Caco-2 (cell line): ENCODE measurements at regions of chr11 and their contacts with region 1.

Region 1: GRCh38 chr11:124724979-124725718 is 14.6 kb upstream of the NRGN start:
- DNase-seq: peak; percentile 67 to 76
- H3K4me3 ChIP-seq: no peak overlapping the region
- H3K4me3 Mint-ChIP-seq: peak overlapping the region; percentile 63
- H3K27ac Mint-ChIP-seq: peak overlapping the region; percentile 7
- H3K4me1 ChIP-seq: peaks cover 15% of the 10 kb centered on the region
- H3K4me1 Mint-ChIP-seq: peaks cover 17% of the 10 kb centered on the region
- H3K27me3 ChIP-seq: no peaks in the 10 kb centered on the region
- H3K27me3 Mint-ChIP-seq: peaks cover 6% of the 10 kb centered on the region
- CTCF ChIP-seq: no peak

Region 2: DNA sequence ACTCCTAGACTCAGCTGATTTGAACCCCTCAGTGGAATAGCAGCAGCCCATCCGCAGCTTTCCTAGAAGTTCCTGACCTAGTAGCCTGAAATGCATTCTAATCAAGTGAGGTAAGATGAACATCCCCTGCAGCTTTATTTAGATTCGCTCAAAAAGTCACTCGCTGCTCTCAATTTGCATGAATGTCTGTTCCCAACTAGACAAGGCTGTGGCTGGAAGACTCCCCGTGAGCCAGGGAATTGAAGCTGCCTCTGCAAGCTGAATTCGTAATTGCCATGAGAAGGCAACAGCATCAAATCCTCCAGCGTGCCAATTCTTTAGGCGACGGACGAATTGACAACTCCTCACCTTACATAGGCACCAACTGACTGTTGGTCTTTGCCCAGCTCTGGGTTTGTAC is 1053.6 kb before region 1 on chr11:
- CTCF ChIA-PET with region 1: no interaction called
- POLR2A ChIA-PET with region 1: no interaction called
- intact Hi-C with region 1: no loop called
- DNase-seq: no peak
- H3K4me3 ChIP-seq: no peak overlapping the region
- H3K4me3 Mint-ChIP-seq: no peak overlapping the region
- H3K27ac Mint-ChIP-seq: no peak overlapping the region
- H3K4me1 ChIP-seq: no peaks in the 10 kb centered on the region
- H3K4me1 Mint-ChIP-seq: no peaks in the 10 kb centered on the region
- H3K27me3 ChIP-seq: peaks cover 2% of the 10 kb centered on the region; the same call in 1 of the 2 replicates
- H3K27me3 Mint-ChIP-seq: peaks cover 7% of the 10 kb centered on the region
- CTCF ChIP-seq: no peak

Region 3: DNA sequence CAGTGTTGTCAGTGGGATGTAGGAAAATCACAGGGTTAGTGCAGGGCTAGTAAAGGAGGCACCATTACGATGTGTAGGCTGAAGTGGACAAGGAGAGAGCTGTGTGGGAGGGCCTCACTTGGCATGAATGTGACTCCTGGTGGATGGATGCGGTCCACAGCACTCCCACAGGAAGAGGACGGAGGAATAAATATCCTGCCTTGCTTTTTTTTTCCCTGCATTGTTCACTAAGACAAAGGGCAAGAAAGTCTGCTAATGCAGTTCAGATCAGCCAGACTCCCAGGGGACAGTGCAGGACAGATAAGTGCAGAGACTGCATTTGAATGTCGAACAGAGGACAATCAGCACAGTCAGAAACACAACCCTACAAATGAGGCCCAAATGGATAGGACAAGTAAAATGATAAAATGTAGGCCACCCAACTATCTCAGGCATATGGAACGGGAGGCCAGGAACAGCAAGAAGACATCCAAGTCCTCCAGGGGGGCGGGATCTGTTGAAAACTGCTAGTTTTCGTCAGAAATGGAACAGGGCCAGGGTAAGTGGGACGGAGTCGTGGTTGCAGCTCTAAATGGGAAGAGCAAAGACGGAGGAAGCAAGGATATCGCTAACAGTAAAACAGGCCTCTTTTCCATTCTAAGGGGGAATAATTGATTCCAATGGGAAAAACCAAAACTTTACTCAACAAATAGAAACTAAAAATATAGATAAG is 254.5 kb before region 1 on chr11:
- CTCF ChIA-PET with region 1: no interaction called
- POLR2A ChIA-PET with region 1: no interaction called
- intact Hi-C with region 1: no loop called
- DNase-seq: no peak
- H3K4me3 ChIP-seq: no peak overlapping the region
- H3K4me3 Mint-ChIP-seq: no peak overlapping the region
- H3K27ac Mint-ChIP-seq: no peak overlapping the region
- H3K4me1 ChIP-seq: no peaks in the 10 kb centered on the region
- H3K4me1 Mint-ChIP-seq: no peaks in the 10 kb centered on the region
- H3K27me3 ChIP-seq: no peaks in the 10 kb centered on the region; the same call in 1 of the 2 replicates
- H3K27me3 Mint-ChIP-seq: peaks cover 33% of the 10 kb centered on the region
- CTCF ChIP-seq: no peak

Region 4: GRCh38 chr11:124644426-124645280 is 80.5 kb before region 1 on chr11:
- CTCF ChIA-PET with region 1: interaction called, 3 read pairs
- POLR2A ChIA-PET with region 1: no interaction called
- intact Hi-C with region 1: loop called (anchors 1 kb)
- DNase-seq: peak; percentile 77 to 79
- H3K4me3 ChIP-seq: 0 out of 2 replicates have a peak overlapping the region, but pooled peaks have one; percentile 1
- H3K4me3 Mint-ChIP-seq: peak overlapping the region; percentile 54
- H3K27ac Mint-ChIP-seq: no peak overlapping the region
- H3K4me1 ChIP-seq: no peaks in the 10 kb centered on the region
- H3K4me1 Mint-ChIP-seq: no peaks in the 10 kb centered on the region
- H3K27me3 ChIP-seq: no peaks in the 10 kb centered on the region
- H3K27me3 Mint-ChIP-seq: no peaks in the 10 kb centered on the region
- CTCF ChIP-seq: peak; percentile 92 to 99

Region 5: GRCh38 chr11:124699547-124699946 is 25.6 kb before region 1 on chr11:
- CTCF ChIA-PET with region 1: no interaction called
- POLR2A ChIA-PET with region 1: interaction called, 20 read pairs
- intact Hi-C with region 1: no loop called
- DNase-seq: no peak
- H3K4me3 ChIP-seq: no peak overlapping the region
- H3K4me3 Mint-ChIP-seq: no peak overlapping the region
- H3K27ac Mint-ChIP-seq: no peak overlapping the region
- H3K4me1 ChIP-seq: no peaks in the 10 kb centered on the region
- H3K4me1 Mint-ChIP-seq: no peaks in the 10 kb centered on the region
- H3K27me3 ChIP-seq: no peaks in the 10 kb centered on the region; the same call in 1 of the 2 replicates
- H3K27me3 Mint-ChIP-seq: peaks cover 21% of the 10 kb centered on the region
- CTCF ChIP-seq: no peak

Region 6: GRCh38 chr11:124739479-124740276 is 14.5 kb after region 1 on chr11 and contains the start of gene NRGN:
- CTCF ChIA-PET with region 1: interaction called, 12 read pairs
- POLR2A ChIA-PET with region 1: interaction called, 3 read pairs
- intact Hi-C with region 1: loop called (anchors 1 kb)
- DNase-seq: peak; percentile 96 to 98
- H3K4me3 ChIP-seq: peak within 1 kb of the TSS; percentile 62
- H3K4me3 Mint-ChIP-seq: peak within 1 kb of the TSS; percentile 65
- H3K27ac Mint-ChIP-seq: no peak within 1 kb of the TSS
- H3K4me1 ChIP-seq: peaks cover 6% of the 10 kb centered on the region
- H3K4me1 Mint-ChIP-seq: peaks cover 6% of the 10 kb centered on the region
- H3K27me3 ChIP-seq: peaks cover 8% of the 10 kb centered on the region
- H3K27me3 Mint-ChIP-seq: peaks cover 40% of the 10 kb centered on the region
- CTCF ChIP-seq: no peak
- total RNA-seq, gene NRGN: 5.7 and 7.8 TPM in 2 replicates

Region 7: GRCh38 chr11:124746621-124747243 is 21.6 kb after region 1 on chr11:
- CTCF ChIA-PET with region 1: interaction called, 8 read pairs
- POLR2A ChIA-PET with region 1: interaction called, 3 read pairs
- intact Hi-C with region 1: loop called (anchors 1 kb)
- DNase-seq: peak; percentile 94 to 98
- H3K4me3 ChIP-seq: peak overlapping the region; percentile 57
- H3K4me3 Mint-ChIP-seq: peak overlapping the region; percentile 84
- H3K27ac Mint-ChIP-seq: peak overlapping the region; percentile 60
- H3K4me1 ChIP-seq: peaks cover 25% of the 10 kb centered on the region
- H3K4me1 Mint-ChIP-seq: peaks cover 17% of the 10 kb centered on the region
- H3K27me3 ChIP-seq: peaks cover under 1% of the 10 kb centered on the region; the same call in 1 of the 2 replicates
- H3K27me3 Mint-ChIP-seq: peaks cover 7% of the 10 kb centered on the region
- CTCF ChIP-seq: peak; percentile 75 to 94